Heart left ventricle (tissue), 16 donors: ENCODE measurements at regions of chr2 and their contacts with region 1.

Region 1: DNA sequence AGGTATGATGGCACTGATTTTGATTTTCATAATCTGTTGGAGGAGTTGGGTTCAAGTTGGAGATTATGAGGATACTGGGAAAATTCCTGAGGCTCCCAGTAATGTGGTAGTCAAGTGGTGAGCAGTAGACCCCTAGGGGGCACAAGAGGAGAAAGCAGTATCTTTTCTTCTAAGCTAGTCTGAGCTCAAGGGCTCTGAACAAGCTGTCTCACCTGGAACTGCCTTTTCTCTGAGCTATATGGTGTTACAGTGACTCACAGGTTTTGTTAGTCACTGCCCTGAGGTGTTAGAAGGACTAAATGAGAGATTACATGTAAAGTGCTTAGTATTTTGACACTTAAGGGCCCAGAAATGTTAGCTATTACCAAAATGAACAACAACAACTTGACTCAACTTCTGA is 42.2 kb downstream of the CD302 start:
- DNase-seq: no peak
- ATAC-seq: peak in 3 of 4 donors; percentile 46 to 56 (median 51)
- H3K4me3 ChIP-seq: no peak overlapping the region
- H3K27ac ChIP-seq: peak overlapping the region in 2 of 12 donors; percentile 47 to 50
- H3K4me1 ChIP-seq: peaks cover 0 to 61% (median 29%) of the 10 kb centered on the region in 12 donors
- H3K27me3 ChIP-seq: no peaks in the 10 kb centered on the region
- CTCF ChIP-seq: peak in 3 of 12 donors; percentile 16 to 29 (median 20)
- POLR2A ChIP-seq: no peak

Region 2: DNA sequence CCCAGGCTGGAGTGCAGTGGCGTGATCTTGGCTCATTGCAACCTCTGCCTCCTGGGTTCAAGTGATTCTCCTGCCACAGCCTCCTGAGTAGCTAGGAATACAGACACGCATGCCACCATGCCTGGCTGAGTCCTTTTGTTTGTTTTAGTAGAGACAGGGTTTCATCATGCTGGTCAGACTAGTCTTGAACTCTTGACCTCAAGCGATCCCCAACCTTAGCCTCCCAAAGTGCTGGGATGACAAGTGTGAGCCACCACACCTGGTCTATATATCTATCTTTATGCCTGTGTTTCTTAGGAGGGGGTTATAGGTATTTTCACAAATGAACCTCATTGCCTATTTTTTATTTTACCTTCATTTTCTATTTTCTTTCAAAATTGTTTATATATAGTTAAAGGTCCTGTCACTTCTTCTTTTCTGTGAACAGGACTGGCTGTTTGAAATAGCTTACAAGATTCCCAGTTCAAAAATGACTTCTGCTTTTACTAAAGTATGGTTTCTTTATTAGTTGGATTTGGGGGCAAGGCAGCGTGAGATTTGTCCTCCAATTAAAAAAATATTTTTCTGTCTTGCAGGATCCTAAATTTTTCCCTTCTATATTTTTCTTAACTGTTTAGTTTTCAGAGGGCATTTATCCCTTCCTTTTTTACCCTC is 59.9 kb before region 1 on chr2:
- intact Hi-C with region 1: no loop called
- DNase-seq: no peak
- ATAC-seq: no peak
- H3K4me3 ChIP-seq: peak overlapping the region in 1 of 12 donors; percentile 15
- H3K27ac ChIP-seq: peak overlapping the region in 1 of 12 donors; percentile 38
- H3K4me1 ChIP-seq: peaks cover 0 to 5% (median 0%) of the 10 kb centered on the region in 12 donors
- H3K27me3 ChIP-seq: no peaks in the 10 kb centered on the region
- CTCF ChIP-seq: no peak
- POLR2A ChIP-seq: no peak

Region 3: GRCh38 chr2:159725713-159726112 is 30.1 kb before region 1 on chr2:
- intact Hi-C with region 1: loop called in 1 of 10 experiments (anchors 2 kb)
- DNase-seq: no peak
- ATAC-seq: peak in 2 of 4 donors; percentile 33 to 37
- H3K4me3 ChIP-seq: no peak overlapping the region
- H3K27ac ChIP-seq: peak overlapping the region in 1 of 12 donors; percentile 11
- H3K4me1 ChIP-seq: peaks cover 0 to 73% (median 39%) of the 10 kb centered on the region in 12 donors
- H3K27me3 ChIP-seq: no peaks in the 10 kb centered on the region
- CTCF ChIP-seq: no peak
- POLR2A ChIP-seq: no peak

Region 4: DNA sequence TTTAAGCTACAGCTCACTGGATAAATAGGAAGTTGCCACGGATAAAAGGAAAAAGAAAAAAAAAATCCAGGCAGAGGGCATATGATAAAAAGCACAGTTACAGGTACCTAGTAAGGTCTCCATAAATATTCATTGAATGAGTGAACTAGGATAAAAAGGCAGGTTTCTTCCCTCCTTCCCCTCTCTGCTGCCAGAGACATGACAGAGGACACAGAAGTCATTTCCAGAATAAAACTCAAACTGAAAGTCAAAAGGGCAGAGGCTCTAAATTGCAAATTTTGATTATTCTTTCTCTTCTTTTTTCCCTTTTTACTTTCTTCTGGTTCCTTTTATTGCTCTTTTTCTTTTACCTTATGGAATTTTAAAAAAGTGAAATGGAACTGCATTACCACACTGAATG is 34.5 kb after region 1 on chr2:
- intact Hi-C with region 1: loop called in 2 of 10 experiments (anchors 5 kb)
- DNase-seq: no peak
- ATAC-seq: no peak
- H3K4me3 ChIP-seq: no peak overlapping the region
- H3K27ac ChIP-seq: no peak overlapping the region
- H3K4me1 ChIP-seq: peaks cover 0 to 44% (median 4%) of the 10 kb centered on the region in 12 donors
- H3K27me3 ChIP-seq: no peaks in the 10 kb centered on the region
- CTCF ChIP-seq: no peak
- POLR2A ChIP-seq: no peak

Region 5: DNA sequence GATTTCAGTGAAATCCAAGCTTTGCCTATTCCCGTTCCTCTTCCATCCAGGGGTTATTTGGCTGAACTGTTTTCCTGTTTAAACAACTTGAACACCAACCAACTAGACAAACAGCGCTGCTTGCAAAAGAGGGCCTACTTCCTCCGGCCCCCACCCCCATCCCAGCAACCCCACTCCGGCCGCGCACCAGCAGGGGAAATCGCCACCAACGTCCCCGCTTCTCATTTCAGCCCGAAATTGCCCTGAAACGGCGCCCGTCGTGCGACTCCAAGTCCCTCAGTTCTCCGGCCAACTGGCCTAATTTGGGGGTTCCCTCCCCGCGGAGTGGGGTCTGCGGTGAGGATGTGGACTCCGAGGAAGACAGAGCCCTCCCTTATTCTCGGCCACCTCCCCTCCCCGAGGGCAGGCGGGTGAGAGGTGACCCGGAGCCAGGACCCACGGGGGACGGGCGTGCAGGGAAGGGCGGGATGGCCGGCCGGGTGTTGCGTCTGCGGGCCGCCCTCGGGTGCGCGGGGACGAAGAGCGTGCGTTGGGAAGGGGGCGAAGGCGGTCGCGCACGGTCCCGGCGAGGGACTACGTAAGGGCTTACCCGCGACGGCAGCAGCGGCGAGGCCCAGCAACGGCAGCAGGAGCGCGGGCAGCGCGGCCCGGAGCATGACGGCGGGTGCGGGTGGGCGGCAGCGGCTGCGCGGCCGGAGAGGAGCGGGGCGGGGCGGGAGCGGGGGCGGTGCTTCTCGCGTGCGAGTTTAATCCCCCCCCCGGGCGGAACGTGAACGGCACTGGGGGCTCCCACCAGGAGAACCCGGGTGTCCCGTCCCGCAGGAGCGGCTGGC is 42.0 kb after region 1 on chr2 and contains the start of gene CD302:
- intact Hi-C with region 1: loop called in 2 of 10 experiments (anchors 5 kb)
- DNase-seq: peak; percentile 82 to 90 (median 86)
- ATAC-seq: peak; percentile 49 to 92 (median 86)
- H3K4me3 ChIP-seq: peak within 1 kb of the TSS; percentile 62 to 96 (median 80)
- H3K27ac ChIP-seq: peak within 1 kb of the TSS; percentile 58 to 94 (median 77)
- H3K4me1 ChIP-seq: peaks cover 0 to 61% (median 13%) of the 10 kb centered on the region in 12 donors
- H3K27me3 ChIP-seq: no peaks in the 10 kb centered on the region
- CTCF ChIP-seq: no peak
- POLR2A ChIP-seq: peak in 1 of 2 donors; percentile 57
- total RNA-seq, gene CD302: 9.0 to 24.9 (median 13.7) TPM

Region 6: DNA sequence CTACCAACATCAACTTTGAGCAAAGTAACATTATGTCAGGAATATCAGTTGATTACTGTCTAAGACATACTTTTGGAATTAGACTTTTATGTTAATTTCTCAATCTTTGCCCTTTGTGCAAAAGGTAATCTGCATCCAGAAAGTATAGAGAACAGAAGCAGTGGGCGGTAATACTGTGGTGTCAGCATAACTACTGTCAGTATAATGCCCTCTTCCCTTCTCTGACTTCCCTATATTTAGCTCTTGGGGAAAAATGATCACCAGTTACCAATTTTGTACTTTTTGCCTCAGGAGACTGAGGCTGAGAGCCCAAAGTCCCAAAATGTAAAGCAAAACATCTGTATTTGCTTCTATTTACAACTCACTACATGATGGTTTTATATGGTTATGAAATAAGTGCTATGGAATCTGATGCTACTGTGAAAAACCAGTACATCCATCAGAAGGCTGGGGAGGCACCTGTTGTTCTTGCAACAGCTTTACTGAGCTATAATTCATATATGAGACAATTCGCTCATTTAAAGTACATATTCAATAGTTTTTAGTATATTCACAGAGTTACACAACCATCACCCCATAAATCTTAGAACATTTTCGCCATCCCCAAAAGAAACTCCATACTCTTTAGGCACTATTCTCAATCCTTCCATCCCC is 93.5 kb after region 1 on chr2:
- intact Hi-C with region 1: no loop called
- DNase-seq: no peak
- ATAC-seq: no peak
- H3K4me3 ChIP-seq: no peak overlapping the region
- H3K27ac ChIP-seq: no peak overlapping the region
- H3K4me1 ChIP-seq: peaks cover 0 to 4% (median 0%) of the 10 kb centered on the region in 12 donors
- H3K27me3 ChIP-seq: no peaks in the 10 kb centered on the region
- CTCF ChIP-seq: no peak
- POLR2A ChIP-seq: no peak